Pancreas (tissue), 10 donors: ENCODE measurements at regions of chr9 and their contacts with region 1.

Region 1: DNA sequence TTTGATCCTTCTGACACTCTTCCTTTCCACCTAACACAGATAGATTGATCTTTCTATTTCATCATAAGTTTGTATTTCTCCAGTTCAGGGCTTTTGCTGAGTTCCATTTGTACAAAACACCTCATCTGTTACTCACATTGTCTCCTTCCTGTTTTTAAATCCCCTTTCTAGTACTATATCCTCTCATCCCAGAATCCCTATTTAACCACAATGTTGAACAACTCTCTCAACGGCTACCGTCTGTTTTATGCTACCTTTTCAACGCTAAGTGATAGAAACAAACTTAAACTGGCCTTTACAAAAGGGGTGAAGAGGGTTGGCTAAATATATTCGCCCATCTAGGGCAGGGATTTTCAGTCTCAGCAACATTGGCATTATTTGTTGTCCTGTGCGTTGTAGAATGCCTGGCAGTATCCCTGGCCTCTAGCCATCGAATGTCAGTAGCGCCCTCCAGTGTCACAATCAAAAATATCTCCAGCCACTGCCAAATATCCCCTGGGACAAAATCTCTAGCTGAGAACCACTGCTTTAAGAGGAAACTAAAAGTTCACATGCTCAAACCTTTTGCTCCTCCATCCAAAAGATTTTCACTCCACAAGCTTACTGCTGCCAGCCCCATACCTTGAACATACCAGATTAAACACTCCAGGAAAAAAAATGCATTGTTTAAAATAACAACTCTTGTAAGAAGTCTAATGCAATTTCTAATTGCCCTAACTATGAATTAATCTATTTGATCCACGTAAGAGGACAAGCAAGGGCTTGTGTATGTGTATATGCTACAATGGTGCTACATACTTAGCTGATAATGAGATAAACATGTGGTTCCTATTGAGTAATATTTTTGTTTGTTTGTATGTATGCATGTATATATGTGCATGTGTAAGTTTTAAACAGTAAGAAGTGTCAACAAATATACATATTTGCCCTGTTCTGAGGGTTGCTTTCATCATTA is 344.0 kb downstream of the PTPRD start:
- DNase-seq: peak in 2 of 6 donors; percentile 9 to 36
- ATAC-seq: peak; percentile 71 to 95 (median 84)
- H3K4me3 ChIP-seq: no peak overlapping the region
- H3K27ac ChIP-seq: no peak overlapping the region
- H3K4me1 ChIP-seq: no peaks in the 10 kb centered on the region
- H3K27me3 ChIP-seq: no peaks in the 10 kb centered on the region
- CTCF ChIP-seq: peak in 2 of 4 donors; percentile 19 to 21

Region 2: DNA sequence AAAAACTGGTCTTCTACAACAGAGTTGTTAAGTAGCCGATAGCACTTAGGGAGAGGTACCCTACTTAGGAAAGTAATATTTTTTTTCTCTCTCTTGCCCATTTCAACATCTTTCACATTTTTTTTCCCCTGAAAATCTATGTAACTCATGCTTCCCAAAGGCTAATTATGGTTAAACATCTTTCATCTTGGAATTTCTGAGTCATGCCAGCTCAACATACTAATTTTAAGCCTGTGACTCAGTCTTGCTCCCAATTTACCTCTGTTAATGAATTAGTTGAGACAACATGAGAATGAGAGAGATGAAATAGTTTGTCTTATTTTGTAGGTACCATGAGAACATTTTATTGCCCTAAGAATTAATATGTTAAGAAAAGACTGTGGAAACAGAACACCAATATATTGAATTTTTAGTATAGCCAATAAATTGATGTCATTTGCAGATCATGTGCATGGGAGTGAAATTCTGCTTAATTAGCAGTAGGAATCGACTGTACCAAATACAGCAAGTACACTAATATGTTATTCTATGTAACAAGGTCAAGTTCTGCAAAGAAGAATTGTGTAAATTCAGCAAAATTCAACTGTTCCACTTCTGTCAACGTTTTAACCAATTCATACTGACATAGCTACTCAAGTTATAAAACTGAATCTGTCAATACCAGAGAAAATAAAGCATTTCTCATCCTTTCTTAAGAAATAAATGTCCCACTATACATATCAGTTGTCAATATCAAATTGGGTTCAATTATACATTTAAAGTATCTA is 206.0 kb before region 1 on chr9:
- intact Hi-C with region 1: loop called in 1 of 3 experiments (anchors 10 kb)
- DNase-seq: no peak
- ATAC-seq: no peak
- H3K4me3 ChIP-seq: no peak overlapping the region
- H3K27ac ChIP-seq: no peak overlapping the region
- H3K4me1 ChIP-seq: no peaks in the 10 kb centered on the region
- H3K27me3 ChIP-seq: no peaks in the 10 kb centered on the region
- CTCF ChIP-seq: no peak

Region 3: GRCh38 chr9:10331157-10331556 is 62.3 kb after region 1 on chr9:
- intact Hi-C with region 1: no loop called
- DNase-seq: no peak
- ATAC-seq: no peak
- H3K4me3 ChIP-seq: no peak overlapping the region
- H3K27ac ChIP-seq: no peak overlapping the region
- H3K4me1 ChIP-seq: no peaks in the 10 kb centered on the region
- H3K27me3 ChIP-seq: no peaks in the 10 kb centered on the region
- CTCF ChIP-seq: no peak